GM12878 (cell line): ENCODE measurements at regions of chr3 and their contacts with region 1.

Region 1: DNA sequence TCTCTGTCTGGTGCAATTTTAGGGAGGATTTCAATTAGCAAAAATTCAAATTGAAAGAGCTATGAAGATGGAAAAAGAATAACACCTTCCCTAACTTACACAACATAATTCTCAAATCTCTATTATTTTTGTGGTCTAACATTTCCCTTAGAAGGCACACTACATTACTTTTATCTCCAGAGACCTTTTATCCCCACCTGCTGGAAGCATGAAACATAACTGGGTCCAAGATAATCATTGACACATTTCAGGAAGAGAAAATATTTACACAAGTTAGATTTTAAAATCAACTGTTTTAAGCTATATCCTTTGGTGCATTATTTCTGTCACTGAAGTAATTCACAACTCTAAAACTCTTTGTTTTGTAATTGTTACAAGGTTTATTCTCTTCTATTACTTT is 779.5 kb downstream of the ROBO1 start:
- DNase-seq: no peak
- ATAC-seq: no peak
- H3K4me3 ChIP-seq: no peak overlapping the region
- H3K27ac ChIP-seq: no peak overlapping the region
- H3K4me1 ChIP-seq: no peaks in the 10 kb centered on the region
- H3K27me3 ChIP-seq: no peaks in the 10 kb centered on the region
- CTCF ChIP-seq: peak in 1 of 3 experiments; percentile 32; a peak in 1 of 6 replicates
- EP300 ChIP-seq: no peak
- POLR2A ChIP-seq: no peak
- RAD21 ChIP-seq: peak; percentile 23

Region 2: GRCh38 chr3:78863306-78864203 is 124.8 kb before region 1 on chr3:
- CTCF ChIA-PET with region 1: interaction called, 3 read pairs
- POLR2A ChIA-PET with region 1: interaction called, 4 read pairs
- RAD21 ChIA-PET with region 1: interaction called, 3 read pairs
- SMC1A ChIA-PET with region 1: interaction called, 10 read pairs
- in situ Hi-C with region 1: no loop called
- intact Hi-C with region 1: no loop called
- DNase-seq: no peak
- ATAC-seq: peak; percentile 34; the same call in 2 of the 3 replicates
- H3K4me3 ChIP-seq: no peak overlapping the region
- H3K27ac ChIP-seq: no peak overlapping the region
- H3K4me1 ChIP-seq: no peaks in the 10 kb centered on the region
- H3K27me3 ChIP-seq: no peaks in the 10 kb centered on the region
- CTCF ChIP-seq: no peak
- EP300 ChIP-seq: no peak
- POLR2A ChIP-seq: no peak
- RAD21 ChIP-seq: no peak

Region 3: GRCh38 chr3:79005084-79005483 is 16.8 kb after region 1 on chr3:
- CTCF ChIA-PET with region 1: interaction called, 7 read pairs
- POLR2A ChIA-PET with region 1: interaction called, 4 read pairs
- RAD21 ChIA-PET with region 1: interaction called, 75 read pairs
- SMC1A ChIA-PET with region 1: interaction called, 20 read pairs
- in situ Hi-C with region 1: no loop called
- intact Hi-C with region 1: no loop called
- DNase-seq: no peak
- ATAC-seq: no peak
- H3K4me3 ChIP-seq: no peak overlapping the region
- H3K27ac ChIP-seq: no peak overlapping the region
- H3K4me1 ChIP-seq: no peaks in the 10 kb centered on the region
- H3K27me3 ChIP-seq: no peaks in the 10 kb centered on the region
- CTCF ChIP-seq: no peak
- EP300 ChIP-seq: no peak
- POLR2A ChIP-seq: no peak
- RAD21 ChIP-seq: no peak

Region 4: DNA sequence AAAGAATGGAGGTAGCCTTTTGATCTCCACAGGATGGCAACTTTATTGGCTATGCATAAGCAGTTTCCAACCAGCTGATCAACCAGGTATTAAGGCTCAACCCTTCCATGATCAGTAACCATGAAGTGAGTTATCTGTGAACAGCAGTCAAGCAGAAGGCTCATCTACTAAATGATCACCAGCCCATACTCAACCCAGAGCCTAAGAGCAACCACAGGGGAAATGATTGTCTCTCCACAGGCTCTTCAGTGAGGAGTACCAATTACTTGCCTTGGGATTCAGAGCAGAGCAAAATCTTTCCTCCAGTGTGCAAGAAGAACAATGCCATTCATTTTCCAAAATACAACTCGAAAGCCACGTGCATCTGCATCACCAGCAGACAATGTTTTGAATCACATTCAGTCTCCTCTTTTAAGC is 24.6 kb after region 1 on chr3:
- CTCF ChIA-PET with region 1: interaction called, 10 read pairs
- POLR2A ChIA-PET with region 1: interaction called, 10 read pairs
- RAD21 ChIA-PET with region 1: interaction called, 75 read pairs
- SMC1A ChIA-PET with region 1: interaction called, 32 read pairs
- in situ Hi-C with region 1: no loop called
- intact Hi-C with region 1: no loop called
- DNase-seq: no peak
- ATAC-seq: peak; percentile 24; the same call in 2 of the 3 replicates
- H3K4me3 ChIP-seq: no peak overlapping the region
- H3K27ac ChIP-seq: no peak overlapping the region
- H3K4me1 ChIP-seq: no peaks in the 10 kb centered on the region
- H3K27me3 ChIP-seq: no peaks in the 10 kb centered on the region
- CTCF ChIP-seq: no peak
- EP300 ChIP-seq: no peak
- POLR2A ChIP-seq: no peak
- RAD21 ChIP-seq: no peak

Region 5: GRCh38 chr3:79032686-79033318 is 44.5 kb after region 1 on chr3:
- CTCF ChIA-PET with region 1: interaction called, 4 read pairs
- POLR2A ChIA-PET with region 1: no interaction called
- RAD21 ChIA-PET with region 1: interaction called, 16 read pairs
- SMC1A ChIA-PET with region 1: interaction called, 4 read pairs
- in situ Hi-C with region 1: no loop called
- intact Hi-C with region 1: no loop called
- DNase-seq: no peak
- ATAC-seq: peak; percentile 78
- H3K4me3 ChIP-seq: no peak overlapping the region
- H3K27ac ChIP-seq: no peak overlapping the region
- H3K4me1 ChIP-seq: no peaks in the 10 kb centered on the region
- H3K27me3 ChIP-seq: no peaks in the 10 kb centered on the region
- CTCF ChIP-seq: peak; percentile 35 to 59 (median 35); a peak in 5 of 6 replicates
- EP300 ChIP-seq: no peak
- POLR2A ChIP-seq: no peak
- RAD21 ChIP-seq: peak; percentile 77

Region 6: GRCh38 chr3:79139395-79140068 is 151.2 kb after region 1 on chr3:
- CTCF ChIA-PET with region 1: no interaction called
- POLR2A ChIA-PET with region 1: no interaction called
- RAD21 ChIA-PET with region 1: no interaction called
- SMC1A ChIA-PET with region 1: no interaction called
- in situ Hi-C with region 1: no loop called
- intact Hi-C with region 1: no loop called
- DNase-seq: no peak
- ATAC-seq: no peak
- H3K4me3 ChIP-seq: no peak overlapping the region
- H3K27ac ChIP-seq: no peak overlapping the region
- H3K4me1 ChIP-seq: no peaks in the 10 kb centered on the region
- H3K27me3 ChIP-seq: no peaks in the 10 kb centered on the region
- CTCF ChIP-seq: no peak
- EP300 ChIP-seq: no peak
- POLR2A ChIP-seq: no peak
- RAD21 ChIP-seq: no peak

Region 7: DNA sequence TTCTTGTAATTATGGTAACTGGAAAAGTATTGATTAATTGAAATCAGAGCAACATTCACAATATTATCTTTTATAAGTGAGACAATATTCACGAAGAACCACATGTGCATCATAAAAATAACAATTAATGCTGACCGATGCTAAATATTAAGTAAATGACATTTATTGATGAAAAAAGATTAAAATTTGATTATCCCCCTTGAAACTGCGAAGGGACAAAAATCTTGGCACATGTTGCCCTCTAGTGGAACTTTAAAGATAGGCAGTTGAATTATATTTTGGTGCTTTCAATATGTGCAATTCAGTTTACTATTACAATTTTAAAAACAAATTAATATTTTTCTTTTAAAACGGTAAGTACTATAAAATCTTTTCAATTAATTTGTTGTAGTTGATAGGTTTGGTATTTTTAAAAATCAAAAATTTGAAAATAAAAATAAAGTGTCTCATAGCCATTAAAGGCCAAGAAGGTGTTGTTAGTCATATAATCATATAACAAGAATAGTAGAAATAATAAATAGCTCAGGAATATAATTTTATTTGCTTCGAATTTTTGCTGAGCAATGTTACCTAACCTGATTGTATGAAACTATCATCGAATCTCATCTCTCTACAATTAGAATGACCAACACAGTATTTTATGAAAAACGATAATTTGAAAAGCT is 509.3 kb after region 1 on chr3:
- CTCF ChIA-PET with region 1: no interaction called
- POLR2A ChIA-PET with region 1: no interaction called
- RAD21 ChIA-PET with region 1: no interaction called
- SMC1A ChIA-PET with region 1: no interaction called
- in situ Hi-C with region 1: no loop called
- intact Hi-C with region 1: no loop called
- DNase-seq: no peak
- ATAC-seq: no peak
- H3K4me3 ChIP-seq: no peak overlapping the region
- H3K27ac ChIP-seq: no peak overlapping the region
- H3K4me1 ChIP-seq: no peaks in the 10 kb centered on the region
- H3K27me3 ChIP-seq: no peaks in the 10 kb centered on the region
- CTCF ChIP-seq: peak; percentile 46 to 54 (median 46); a peak in 5 of 6 replicates
- EP300 ChIP-seq: no peak
- POLR2A ChIP-seq: no peak
- RAD21 ChIP-seq: peak; percentile 47